ENCODE measurements at regions of chr16 and their contacts with region 1.

Region 1: GRCh38 chr16:4882633-4883285 is 35.5 kb downstream of the UBN1 start:
- DNase-seq: peak; percentile 94 to 95
- H3K4me3 ChIP-seq: no peak overlapping the region
- H3K27ac ChIP-seq: peak overlapping the region; percentile 19 to 31 (median 20)
- H3K4me1 ChIP-seq: peaks cover 7 to 16% of the 10 kb centered on the region in 2 donors
- H3K27me3 ChIP-seq: no peaks in the 10 kb centered on the region
- CTCF ChIP-seq: peak in 1 of 6 experiments; percentile 7
- POLR2A ChIP-seq: no peak

Region 2: GRCh38 chr16:4915226-4915761 is 32.5 kb after region 1 on chr16:
- intact Hi-C with region 1: loop called (anchors 2 kb)
- DNase-seq: no peak
- H3K4me3 ChIP-seq: no peak overlapping the region
- H3K27ac ChIP-seq: peak overlapping the region in 2 of 3 donors; percentile 17 to 19
- H3K4me1 ChIP-seq: peaks cover 14 to 42% of the 10 kb centered on the region in 2 donors
- H3K27me3 ChIP-seq: no peaks in the 10 kb centered on the region
- CTCF ChIP-seq: no peak
- POLR2A ChIP-seq: no peak

Region 3: DNA sequence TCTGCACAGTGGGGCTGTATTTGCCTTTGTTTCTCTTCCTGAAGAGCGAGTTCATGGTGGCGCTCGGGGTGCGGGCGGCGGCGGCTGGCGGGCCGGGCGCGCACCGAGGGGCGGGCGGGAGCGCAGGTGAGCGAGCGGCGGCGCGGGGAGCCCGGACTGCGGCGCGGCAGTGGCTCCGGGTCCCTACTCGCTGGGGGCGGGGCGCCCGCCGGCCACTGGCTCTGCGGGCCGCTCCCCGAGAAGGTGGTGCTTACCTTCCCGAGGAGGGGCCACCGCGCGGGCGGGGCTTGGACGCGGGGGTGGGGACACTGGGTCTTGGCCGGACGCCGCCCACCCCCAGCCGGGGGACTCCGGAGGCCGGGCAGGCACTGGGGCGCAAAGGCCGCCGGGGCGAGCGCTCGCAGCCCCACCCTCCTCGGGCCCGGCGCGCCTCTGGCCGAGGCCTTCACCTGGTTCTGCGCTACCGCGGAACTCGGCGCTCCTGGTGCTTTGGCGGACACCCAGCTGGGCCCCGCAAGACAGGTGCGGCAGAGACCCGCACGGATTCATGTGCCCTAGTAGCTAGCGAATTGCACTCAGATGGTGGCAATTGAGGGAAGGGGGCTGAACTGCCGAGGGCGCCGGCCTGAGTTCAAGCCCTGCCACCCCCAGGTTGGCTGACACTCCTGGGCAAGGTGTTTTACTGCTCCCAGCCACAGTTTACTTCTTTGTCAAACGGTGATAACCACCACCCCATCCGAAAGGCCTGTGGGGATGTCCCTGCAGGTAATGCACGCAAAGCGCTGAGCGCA is 54.4 kb after region 1 on chr16 and contains the start of gene PPL:
- intact Hi-C with region 1: loop called (anchors 5 kb)
- DNase-seq: peak; percentile 98 to 99
- H3K4me3 ChIP-seq: peak within 1 kb of the TSS; percentile 68 to 86 (median 83)
- H3K27ac ChIP-seq: peak within 1 kb of the TSS; percentile 73 to 94 (median 84)
- H3K4me1 ChIP-seq: peaks cover 31 to 32% of the 10 kb centered on the region in 2 donors
- H3K27me3 ChIP-seq: no peaks in the 10 kb centered on the region
- CTCF ChIP-seq: no peak
- POLR2A ChIP-seq: peak; percentile 81 to 91
- total RNA-seq, gene PPL: 55.5 to 84.9 (median 72.0) TPM